ENCODE measurements at regions of chr2 and their contacts with region 1.

Region 1: DNA sequence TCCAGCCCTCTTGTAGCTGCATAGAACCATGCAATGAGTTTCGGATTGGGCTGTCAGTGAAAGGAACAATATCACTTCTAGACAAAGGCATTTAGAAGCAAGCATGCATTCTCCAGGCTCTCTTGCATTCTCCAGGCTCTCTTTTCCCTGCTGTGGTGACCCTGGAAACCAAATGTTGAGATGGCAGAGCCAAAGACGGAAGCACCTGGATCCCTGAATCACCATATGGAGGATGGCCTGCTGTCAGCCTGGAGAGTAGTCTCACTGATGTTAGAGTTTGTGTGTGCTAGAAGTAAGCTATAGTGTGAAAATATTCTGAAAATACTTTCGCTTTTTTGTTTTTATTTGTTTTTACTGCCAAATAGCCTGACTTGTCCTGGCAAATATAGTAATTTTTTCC is 203.9 kb downstream of the C1D start:
- DNase-seq: no peak
- H3K4me3 ChIP-seq: no peak overlapping the region
- H3K27ac ChIP-seq: no peak overlapping the region
- H3K27me3 ChIP-seq: peaks cover 9% of the 10 kb centered on the region
- CTCF ChIP-seq: no peak

Region 2: GRCh38 chr2:67846370-67847070 is 12.4 kb before region 1 on chr2:
- CTCF ChIA-PET with region 1: interaction called, 11 read pairs
- POLR2A ChIA-PET with region 1: no interaction called
- DNase-seq: peak; percentile 96
- H3K4me3 ChIP-seq: peak overlapping the region; percentile 21; the same call in 1 of the 2 replicates
- H3K27ac ChIP-seq: peak overlapping the region; percentile 40
- H3K27me3 ChIP-seq: no peaks in the 10 kb centered on the region
- CTCF ChIP-seq: peak; percentile 83